Right ventricle myocardium inferior (tissue), 1 donor: ENCODE measurements at regions of chr5 and their contacts with region 1.

Region 1: DNA sequence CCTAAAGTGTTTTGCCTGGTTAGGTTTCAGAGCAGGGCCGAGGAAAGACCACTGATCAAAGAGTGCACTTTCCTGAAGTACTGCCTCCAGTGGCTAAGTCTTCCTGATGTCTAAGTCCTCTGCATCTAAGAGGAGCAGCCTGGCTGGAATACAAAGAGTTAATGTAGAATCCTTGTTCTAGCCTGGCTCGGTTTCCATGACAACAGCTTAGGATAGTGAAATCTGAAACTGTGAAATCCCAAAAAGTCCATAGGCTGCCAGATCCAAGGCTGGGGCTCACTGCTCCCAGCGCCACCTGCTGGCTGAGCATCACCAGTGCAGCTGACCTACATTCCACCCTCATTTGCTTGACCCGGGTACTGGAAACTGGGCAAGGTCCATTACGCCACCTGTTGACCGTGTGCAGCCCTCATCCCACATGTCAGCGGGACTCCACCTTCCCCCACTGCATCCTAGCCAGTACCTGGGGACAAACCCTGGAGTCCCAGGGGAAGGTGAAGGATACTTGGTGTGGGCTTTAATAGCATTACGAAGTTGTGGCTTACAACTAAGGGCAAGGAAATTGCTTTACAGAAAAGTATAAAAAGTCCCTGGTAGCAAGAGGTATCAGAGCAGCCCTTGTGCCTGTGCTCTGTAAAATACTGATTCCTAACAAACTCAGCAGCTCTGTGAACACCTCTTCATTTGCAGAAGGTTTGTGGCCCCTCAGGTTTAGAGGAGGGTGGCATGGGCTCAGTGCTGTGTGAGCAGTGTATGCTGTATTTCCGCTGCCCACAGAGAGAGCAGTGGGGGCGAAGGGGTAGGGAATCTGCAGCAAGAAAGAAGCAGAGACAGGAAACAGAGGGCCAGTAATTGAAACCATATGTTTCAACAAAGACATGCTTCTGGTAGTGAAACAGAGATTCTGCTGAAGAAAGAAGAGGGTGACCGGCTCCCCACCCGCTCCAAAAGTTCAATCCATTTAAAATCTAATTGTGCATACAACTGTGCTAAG is 36.0 kb downstream of the PCDHGC5 start:
- DNase-seq: peak; percentile 92
- ATAC-seq: peak; percentile 72

Region 2: DNA sequence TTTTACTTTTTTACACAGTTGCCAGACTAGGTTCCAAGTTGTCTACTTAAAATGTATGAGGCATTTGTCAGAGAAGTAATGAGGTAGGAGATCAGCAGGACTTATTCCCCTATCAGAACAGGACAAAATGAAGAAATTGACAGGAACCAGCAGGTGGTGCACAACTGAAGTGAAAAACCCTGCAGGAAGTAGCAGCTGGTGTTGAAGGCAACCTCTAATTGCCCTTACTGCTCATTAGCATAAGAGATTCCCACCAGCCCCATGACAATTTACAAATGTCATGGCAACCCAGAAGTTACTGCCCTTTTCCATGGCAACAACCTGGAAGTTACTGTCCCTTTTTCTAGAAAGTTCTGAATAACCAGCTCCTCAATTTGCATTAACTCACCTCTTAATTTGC is 274.3 kb before region 1 on chr5:
- intact Hi-C with region 1: no loop called
- DNase-seq: no peak
- ATAC-seq: no peak

Region 3: DNA sequence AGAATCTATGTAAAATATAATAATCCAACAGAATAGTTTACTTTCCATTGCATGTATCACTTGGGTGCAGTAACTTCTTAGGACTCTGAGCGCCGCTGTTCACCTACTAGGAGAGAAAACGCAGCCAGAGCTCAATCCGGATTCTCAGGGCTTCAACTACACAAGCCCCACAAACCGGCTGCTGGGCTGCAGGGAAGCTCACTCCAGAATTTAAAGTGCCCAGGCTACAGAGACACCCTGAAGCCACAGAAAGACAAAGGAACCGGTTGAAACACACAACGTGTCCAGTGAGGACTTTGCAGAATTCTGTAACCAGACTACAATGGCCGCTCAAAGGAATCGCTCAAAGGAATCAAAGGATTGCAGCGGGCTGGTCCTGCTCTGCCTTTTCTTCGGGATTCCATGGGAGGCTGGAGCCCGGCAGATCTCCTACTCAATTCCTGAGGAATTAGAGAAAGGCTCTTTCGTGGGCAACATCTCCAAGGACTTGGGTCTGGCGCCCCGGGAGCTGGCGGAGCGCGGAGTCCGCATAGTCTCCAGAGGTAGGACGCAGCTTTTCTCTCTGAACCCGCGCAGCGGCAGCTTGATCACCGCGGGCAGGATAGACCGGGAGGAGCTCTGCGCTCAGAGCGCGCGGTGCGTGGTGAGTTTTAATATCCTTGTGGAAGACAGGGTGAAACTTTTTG is 111.9 kb before region 1 on chr5 and contains the start of gene PCDHGA10:
- intact Hi-C with region 1: loop called (anchors 2 kb)
- DNase-seq: no peak
- ATAC-seq: peak; percentile 50
- total RNA-seq, gene PCDHGA10: 4.1 TPM

Region 4: GRCh38 chr5:141430332-141431113 is 94.4 kb before region 1 on chr5 and contains the start of gene PCDHGA12:
- intact Hi-C with region 1: loop called (anchors 2 kb)
- DNase-seq: no peak
- ATAC-seq: peak; percentile 90
- total RNA-seq, gene PCDHGA12: 6.5 TPM

Region 5: DNA sequence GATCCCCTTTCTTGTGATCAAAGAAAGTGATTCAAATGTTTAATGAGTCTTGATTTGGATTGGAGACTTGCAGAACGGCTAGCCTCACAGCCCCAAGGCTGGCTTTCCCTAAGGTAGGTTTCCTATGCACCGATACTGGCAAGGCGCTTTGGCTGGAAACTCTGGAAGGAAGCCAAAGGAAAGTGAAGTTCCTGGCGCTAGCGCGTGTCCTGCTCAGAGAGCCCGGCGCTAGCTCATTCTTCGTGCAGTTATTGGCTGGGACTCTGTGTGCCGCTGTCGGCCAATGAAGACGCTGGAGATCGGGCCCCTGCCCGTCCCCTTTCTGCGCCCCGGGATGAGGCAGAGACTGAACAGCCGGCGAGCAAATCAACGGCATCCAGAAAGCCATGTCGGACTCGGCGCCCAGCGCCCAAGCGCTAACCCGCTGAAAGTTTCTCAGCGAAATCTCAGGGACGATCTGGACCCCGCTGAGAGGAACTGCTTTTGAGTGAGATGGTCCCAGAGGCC is 49.2 kb before region 1 on chr5 and contains the start of gene PCDHGC3:
- intact Hi-C with region 1: loop called (anchors 2 kb)
- DNase-seq: peak; percentile 94
- ATAC-seq: peak; percentile 99
- total RNA-seq, gene PCDHGC3: 22.5 TPM

Region 6: GRCh38 chr5:141557681-141558136 is 32.8 kb after region 1 on chr5:
- intact Hi-C with region 1: loop called (anchors 2 kb)
- DNase-seq: peak; percentile 86
- ATAC-seq: peak; percentile 86